Activated CD8-positive, alpha-beta T cell treated with anti-CD3 and anti-CD28 coated beads for 36 hours (primary cell): ENCODE measurements at regions of chr12 and their contacts with region 1.

Region 1: GRCh38 chr12:53220801-53221202 is 11.2 kb downstream of the RARG start:
- DNase-seq: peak; percentile 92
- ATAC-seq: peak; percentile 65
- H3K4me3 Mint-ChIP-seq: peak overlapping the region; percentile 92
- H3K27ac Mint-ChIP-seq: peak overlapping the region; percentile 96
- H3K4me1 Mint-ChIP-seq: peaks cover 74% of the 10 kb centered on the region
- H3K27me3 Mint-ChIP-seq: no peaks in the 10 kb centered on the region
- CTCF ChIP-seq: no peak

Region 2: DNA sequence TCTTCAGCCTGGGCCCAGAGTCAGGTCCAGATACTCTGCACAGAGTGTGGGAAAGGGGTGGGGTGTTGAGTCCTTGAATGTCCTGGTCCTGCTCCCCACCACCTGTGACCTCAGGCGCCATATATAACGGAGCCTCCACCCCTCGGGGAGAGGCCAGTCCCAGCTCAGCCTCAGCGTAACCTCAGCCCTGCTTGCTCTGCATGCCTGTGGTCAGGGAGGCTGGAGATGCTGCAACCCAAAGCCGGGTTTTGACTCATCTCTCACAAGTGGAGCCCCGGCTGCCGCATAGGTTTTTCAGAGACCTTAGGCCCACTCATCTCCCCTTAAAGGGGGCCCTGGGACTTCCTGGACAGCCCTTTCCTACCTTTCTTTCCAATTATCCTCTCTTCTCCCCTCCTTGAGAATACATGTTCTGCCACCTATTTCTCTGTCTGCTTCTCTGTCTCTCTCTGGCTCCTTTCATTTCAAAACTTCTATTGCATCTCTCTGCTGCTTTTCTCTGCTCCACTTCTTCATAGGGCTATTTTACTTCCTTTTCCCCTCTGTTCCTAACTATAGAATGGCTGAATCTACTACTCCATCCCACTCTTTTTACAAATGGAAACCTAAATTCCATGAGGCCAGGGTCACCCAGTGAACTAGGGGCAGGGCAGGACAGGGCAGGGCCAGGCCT is 14.9 kb before region 1 on chr12:
- CTCF ChIA-PET with region 1: interaction called, 11 read pairs
- POLR2A ChIA-PET with region 1: interaction called, 78 read pairs
- intact Hi-C with region 1: no loop called
- DNase-seq: peak; percentile 92
- ATAC-seq: peak; percentile 72
- H3K4me3 Mint-ChIP-seq: peak overlapping the region; percentile 93
- H3K27ac Mint-ChIP-seq: peak overlapping the region; percentile 91
- H3K4me1 Mint-ChIP-seq: peaks cover 68% of the 10 kb centered on the region
- H3K27me3 Mint-ChIP-seq: no peaks in the 10 kb centered on the region
- CTCF ChIP-seq: no peak

Region 3: GRCh38 chr12:53241623-53242412 is 21.0 kb after region 1 on chr12:
- CTCF ChIA-PET with region 1: interaction called, 3 read pairs
- POLR2A ChIA-PET with region 1: interaction called, 47 read pairs
- intact Hi-C with region 1: no loop called
- DNase-seq: no peak
- ATAC-seq: no peak
- H3K4me3 Mint-ChIP-seq: no peak overlapping the region
- H3K27ac Mint-ChIP-seq: no peak overlapping the region
- H3K4me1 Mint-ChIP-seq: peaks cover 9% of the 10 kb centered on the region
- H3K27me3 Mint-ChIP-seq: no peaks in the 10 kb centered on the region
- CTCF ChIP-seq: no peak

Region 4: GRCh38 chr12:53295070-53295890 is 74.5 kb after region 1 on chr12 and contains the start of gene PFDN5:
- CTCF ChIA-PET with region 1: interaction called, 130 read pairs
- POLR2A ChIA-PET with region 1: interaction called, 10 read pairs
- intact Hi-C with region 1: no loop called
- DNase-seq: peak; percentile 94
- ATAC-seq: peak; percentile 90
- H3K4me3 Mint-ChIP-seq: peak within 1 kb of the TSS; percentile 98
- H3K27ac Mint-ChIP-seq: peak within 1 kb of the TSS; percentile 91
- H3K4me1 Mint-ChIP-seq: peaks cover 43% of the 10 kb centered on the region
- H3K27me3 Mint-ChIP-seq: no peaks in the 10 kb centered on the region
- CTCF ChIP-seq: no peak
- total RNA-seq, gene PFDN5: 322 to 373 TPM